ENCODE measurements at regions of chr16 and their contacts with region 1.

Region 1: GRCh38 chr16:25014500-25015147 is 545 bp downstream of the ARHGAP17 start:
- DNase-seq: peak; percentile 51 to 61
- ATAC-seq: peak; percentile 32 to 57 (median 48)
- H3K4me3 ChIP-seq: peak overlapping the region; percentile 66 to 93 (median 87)
- H3K27ac ChIP-seq: peak overlapping the region; percentile 92 to 99 (median 96)
- H3K4me1 ChIP-seq: peaks cover 3 to 73% (median 53%) of the 10 kb centered on the region in 9 donors
- H3K27me3 ChIP-seq: no peaks in the 10 kb centered on the region
- CTCF ChIP-seq: peak in 3 of 9 donors; percentile 6 to 22 (median 20)

Region 2: GRCh38 chr16:24950275-24950674 is 64.3 kb before region 1 on chr16:
- intact Hi-C with region 1: loop called in 1 of 10 experiments (anchors 10 kb)
- DNase-seq: no peak
- ATAC-seq: no peak
- H3K4me3 ChIP-seq: no peak overlapping the region
- H3K27ac ChIP-seq: no peak overlapping the region
- H3K4me1 ChIP-seq: peaks cover 0 to 4% (median 0%) of the 10 kb centered on the region in 9 donors
- H3K27me3 ChIP-seq: no peaks in the 10 kb centered on the region
- CTCF ChIP-seq: no peak

Region 3: DNA sequence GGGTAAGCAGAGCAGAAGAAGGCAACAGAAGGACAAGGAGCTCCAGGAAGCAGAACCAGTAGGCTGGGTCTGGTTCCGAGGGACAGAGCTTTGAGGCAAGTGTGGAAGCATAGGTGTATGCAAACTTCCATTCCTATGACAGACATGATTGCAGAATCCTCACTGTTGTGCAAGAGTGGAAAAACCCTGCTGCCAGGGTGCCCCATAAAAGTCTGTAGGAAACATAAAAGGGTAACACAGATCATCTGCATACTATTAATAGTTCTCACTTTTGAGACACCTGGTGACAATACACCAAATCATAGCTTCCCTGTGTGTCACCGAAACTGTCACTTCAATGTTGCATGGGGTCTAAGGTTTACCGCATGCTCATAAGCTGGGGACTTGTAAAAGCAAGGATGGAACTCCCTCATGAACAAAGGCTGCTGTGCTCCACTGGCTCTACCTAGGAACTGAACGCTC is 39.2 kb before region 1 on chr16:
- intact Hi-C with region 1: loop called in 7 of 10 experiments (anchors 2 to 5 kb)
- DNase-seq: no peak
- ATAC-seq: peak in 1 of 8 donors; percentile 18
- H3K4me3 ChIP-seq: no peak overlapping the region
- H3K27ac ChIP-seq: peak overlapping the region in 2 of 10 donors; percentile 34 to 90
- H3K4me1 ChIP-seq: peaks cover 14 to 91% (median 74%) of the 10 kb centered on the region in 9 donors
- H3K27me3 ChIP-seq: no peaks in the 10 kb centered on the region
- CTCF ChIP-seq: no peak

Region 4: DNA sequence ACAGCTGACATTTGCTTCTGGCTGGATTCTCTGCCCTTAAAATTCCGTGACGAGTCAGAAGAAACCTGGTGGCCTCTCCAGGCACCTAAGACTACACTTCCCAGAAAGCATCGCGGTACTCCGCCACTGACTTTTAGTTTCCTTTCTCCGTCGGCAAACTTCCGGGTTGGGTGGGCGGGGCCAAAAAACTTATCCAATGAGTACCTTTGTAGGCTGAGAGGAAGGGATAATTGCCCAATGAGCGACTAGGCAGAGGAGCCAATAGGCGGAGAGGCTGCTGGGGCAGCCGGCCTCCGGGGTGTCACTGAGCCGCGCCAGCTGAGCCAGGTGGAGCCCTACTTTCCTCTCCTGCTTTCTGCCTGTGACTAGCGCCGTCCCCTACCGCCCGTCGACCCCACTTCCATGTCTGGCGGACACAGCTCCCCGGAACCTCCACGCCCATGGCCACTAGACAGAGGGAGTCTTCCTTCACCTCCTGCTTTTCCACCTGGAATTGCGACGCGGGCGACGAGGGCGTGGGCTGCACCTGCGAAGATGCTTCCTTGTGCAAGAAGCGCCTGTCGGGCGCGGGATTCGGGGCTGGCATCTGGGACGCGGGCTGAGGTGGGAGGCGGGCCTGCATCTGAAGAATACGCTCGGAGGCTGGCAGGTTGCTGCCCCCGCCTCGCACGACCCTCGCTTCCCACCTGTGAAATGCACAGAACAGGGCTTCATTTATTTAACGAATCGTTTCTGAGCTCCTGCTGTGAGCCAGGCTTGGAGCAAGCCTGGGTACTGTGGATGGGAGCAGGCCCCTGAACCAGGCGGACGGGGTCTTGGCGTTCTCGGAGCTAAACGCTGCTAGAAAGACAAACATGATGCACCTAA is 17.1 kb after region 1 on chr16:
- intact Hi-C with region 1: loop called in 1 of 10 experiments (anchors 1 kb)
- DNase-seq: peak; percentile 84 to 94
- ATAC-seq: peak; percentile 98 to 100 (median 99)
- H3K4me3 ChIP-seq: peak overlapping the region; percentile 67 to 99 (median 78)
- H3K27ac ChIP-seq: peak overlapping the region in 9 of 10 donors; percentile 36 to 79 (median 70)
- H3K4me1 ChIP-seq: peaks cover 0 to 21% (median 13%) of the 10 kb centered on the region in 9 donors
- H3K27me3 ChIP-seq: no peaks in the 10 kb centered on the region
- CTCF ChIP-seq: peak in 3 of 9 donors; percentile 18 to 25 (median 19)

Region 5: GRCh38 chr16:25051406-25052150 is 37.0 kb after region 1 on chr16:
- intact Hi-C with region 1: loop called in 4 of 10 experiments (anchors 2 to 5 kb)
- DNase-seq: no peak
- ATAC-seq: peak in 6 of 8 donors; percentile 35 to 71 (median 60)
- H3K4me3 ChIP-seq: peak overlapping the region in 5 of 10 donors; percentile 5 to 24 (median 20)
- H3K27ac ChIP-seq: peak overlapping the region; percentile 36 to 97 (median 78)
- H3K4me1 ChIP-seq: peaks cover 0 to 54% (median 29%) of the 10 kb centered on the region in 9 donors
- H3K27me3 ChIP-seq: no peaks in the 10 kb centered on the region
- CTCF ChIP-seq: no peak

Region 6: GRCh38 chr16:25106567-25107465 is 92.2 kb after region 1 on chr16:
- intact Hi-C with region 1: no loop called
- DNase-seq: peak; percentile 96 to 97
- ATAC-seq: peak; percentile 88 to 94 (median 90)
- H3K4me3 ChIP-seq: peak overlapping the region; percentile 64 to 99 (median 86)
- H3K27ac ChIP-seq: peak overlapping the region; percentile 79 to 96 (median 94)
- H3K4me1 ChIP-seq: peaks cover 4 to 40% (median 34%) of the 10 kb centered on the region in 9 donors
- H3K27me3 ChIP-seq: no peaks in the 10 kb centered on the region
- CTCF ChIP-seq: peak in 6 of 9 donors; percentile 35 to 53 (median 46)

Region 7: GRCh38 chr16:25257956-25258823 is 243.6 kb after region 1 on chr16:
- intact Hi-C with region 1: no loop called
- DNase-seq: peak; percentile 74 to 79
- ATAC-seq: peak; percentile 44 to 82 (median 58)
- H3K4me3 ChIP-seq: peak overlapping the region; percentile 26 to 93 (median 84)
- H3K27ac ChIP-seq: peak overlapping the region; percentile 92 to 100 (median 99)
- H3K4me1 ChIP-seq: peaks cover 4 to 45% (median 36%) of the 10 kb centered on the region in 9 donors
- H3K27me3 ChIP-seq: no peaks in the 10 kb centered on the region
- CTCF ChIP-seq: no peak